Activated CD8-positive, alpha-beta T cell treated with anti-CD3 and anti-CD28 coated beads for 36 hours (primary cell): ENCODE measurements at regions of chr9 and their contacts with region 1.

Region 1: GRCh38 chr9:4315582-4316215 is 15.8 kb upstream of the GLIS3 start:
- DNase-seq: peak; percentile 89
- ATAC-seq: peak; percentile 98
- H3K4me3 Mint-ChIP-seq: no peak overlapping the region
- H3K27ac Mint-ChIP-seq: no peak overlapping the region
- H3K4me1 Mint-ChIP-seq: peaks cover 17% of the 10 kb centered on the region
- H3K27me3 Mint-ChIP-seq: peaks cover 4% of the 10 kb centered on the region
- CTCF ChIP-seq: peak; percentile 89

Region 2: GRCh38 chr9:4289411-4290380 is 26.0 kb before region 1 on chr9:
- CTCF ChIA-PET with region 1: no interaction called
- POLR2A ChIA-PET with region 1: no interaction called
- intact Hi-C with region 1: no loop called
- DNase-seq: no peak
- ATAC-seq: no peak
- H3K4me3 Mint-ChIP-seq: no peak overlapping the region
- H3K27ac Mint-ChIP-seq: no peak overlapping the region
- H3K4me1 Mint-ChIP-seq: peaks cover 6% of the 10 kb centered on the region
- H3K27me3 Mint-ChIP-seq: peaks cover 12% of the 10 kb centered on the region
- CTCF ChIP-seq: no peak

Region 3: GRCh38 chr9:4301971-4302427 is 13.7 kb before region 1 on chr9:
- CTCF ChIA-PET with region 1: interaction called, 16 read pairs
- POLR2A ChIA-PET with region 1: interaction called, 4 read pairs
- intact Hi-C with region 1: no loop called
- DNase-seq: peak; percentile 31
- ATAC-seq: no peak
- H3K4me3 Mint-ChIP-seq: no peak overlapping the region
- H3K27ac Mint-ChIP-seq: no peak overlapping the region
- H3K4me1 Mint-ChIP-seq: peaks cover 55% of the 10 kb centered on the region
- H3K27me3 Mint-ChIP-seq: peaks cover 35% of the 10 kb centered on the region
- CTCF ChIP-seq: no peak

Region 4: GRCh38 chr9:4333231-4333740 is 17.6 kb after region 1 on chr9:
- CTCF ChIA-PET with region 1: interaction called, 124 read pairs
- POLR2A ChIA-PET with region 1: interaction called, 5 read pairs
- intact Hi-C with region 1: no loop called
- DNase-seq: no peak
- ATAC-seq: no peak
- H3K4me3 Mint-ChIP-seq: no peak overlapping the region
- H3K27ac Mint-ChIP-seq: no peak overlapping the region
- H3K4me1 Mint-ChIP-seq: peaks cover 7% of the 10 kb centered on the region
- H3K27me3 Mint-ChIP-seq: no peaks in the 10 kb centered on the region
- CTCF ChIP-seq: no peak

Region 5: GRCh38 chr9:4339357-4339756 is 23.7 kb after region 1 on chr9:
- CTCF ChIA-PET with region 1: interaction called, 124 read pairs
- POLR2A ChIA-PET with region 1: interaction called, 3 read pairs
- intact Hi-C with region 1: no loop called
- DNase-seq: peak; percentile 95
- ATAC-seq: peak; percentile 95
- H3K4me3 Mint-ChIP-seq: peak overlapping the region; percentile 47
- H3K27ac Mint-ChIP-seq: peak overlapping the region; percentile 60
- H3K4me1 Mint-ChIP-seq: peaks cover 12% of the 10 kb centered on the region
- H3K27me3 Mint-ChIP-seq: no peaks in the 10 kb centered on the region
- CTCF ChIP-seq: peak; percentile 88

Region 6: GRCh38 chr9:4630836-4631235 is 315.1 kb after region 1 on chr9:
- CTCF ChIA-PET with region 1: no interaction called
- POLR2A ChIA-PET with region 1: no interaction called
- intact Hi-C with region 1: loop called (anchors 10 kb)
- DNase-seq: no peak
- ATAC-seq: no peak
- H3K4me3 Mint-ChIP-seq: no peak overlapping the region
- H3K27ac Mint-ChIP-seq: no peak overlapping the region
- H3K4me1 Mint-ChIP-seq: no peaks in the 10 kb centered on the region
- H3K27me3 Mint-ChIP-seq: no peaks in the 10 kb centered on the region
- CTCF ChIP-seq: no peak